ENCODE measurements at regions of chr7 and their contacts with region 1.

Region 1: GRCh38 chr7:120554960-120555571 is 282.1 kb downstream of the KCND2 start:
- DNase-seq: peak in 1 of 2 donors; percentile 13
- ATAC-seq: no peak
- H3K4me3 ChIP-seq: no peak overlapping the region
- H3K27ac ChIP-seq: no peak overlapping the region
- H3K4me1 ChIP-seq: no peaks in the 10 kb centered on the region
- H3K27me3 ChIP-seq: peaks cover 0 to 13% (median 0%) of the 10 kb centered on the region in 7 donors
- CTCF ChIP-seq: peak; percentile 20 to 68 (median 54)

Region 2: DNA sequence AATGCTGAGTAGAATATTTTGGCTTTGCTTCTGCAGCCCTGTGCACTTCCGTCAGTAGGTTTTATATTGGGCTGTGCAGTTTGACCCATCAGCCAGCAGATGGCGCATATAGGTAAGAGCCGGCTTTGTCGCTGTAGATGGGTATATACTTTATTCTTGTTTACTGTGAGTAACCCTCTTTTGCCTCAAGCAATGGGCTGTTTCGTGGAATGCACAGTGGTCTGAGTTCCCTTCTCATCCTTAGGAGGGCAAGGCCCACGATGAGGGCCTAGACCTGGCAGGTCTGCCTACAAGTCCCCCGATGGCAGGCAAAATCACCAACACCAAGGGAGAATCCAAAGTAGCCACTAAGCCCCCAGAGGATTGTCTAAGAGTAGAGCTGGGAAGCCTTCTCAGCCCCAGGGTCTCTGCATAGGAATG is 1285.0 kb before region 1 on chr7:
- intact Hi-C with region 1: loop called in 3 of 10 experiments (anchors 5 to 10 kb)
- DNase-seq: no peak
- ATAC-seq: peak in 1 of 8 donors; percentile 60
- H3K4me3 ChIP-seq: no peak overlapping the region
- H3K27ac ChIP-seq: no peak overlapping the region
- H3K4me1 ChIP-seq: no peaks in the 10 kb centered on the region
- H3K27me3 ChIP-seq: no peaks in the 10 kb centered on the region
- CTCF ChIP-seq: peak in 8 of 9 donors; percentile 34 to 79 (median 58)

Region 3: GRCh38 chr7:119935418-119936025 is 619.5 kb before region 1 on chr7:
- intact Hi-C with region 1: loop called in 2 of 10 experiments (anchors 10 kb)
- DNase-seq: no peak
- ATAC-seq: no peak
- H3K4me3 ChIP-seq: no peak overlapping the region
- H3K27ac ChIP-seq: no peak overlapping the region
- H3K4me1 ChIP-seq: no peaks in the 10 kb centered on the region
- H3K27me3 ChIP-seq: peaks cover 0 to 4% (median 0%) of the 10 kb centered on the region in 7 donors
- CTCF ChIP-seq: peak; percentile 18 to 65 (median 48)

Region 4: GRCh38 chr7:120486164-120486563 is 68.9 kb before region 1 on chr7:
- intact Hi-C with region 1: loop called in 1 of 10 experiments (anchors 10 kb)
- DNase-seq: no peak
- ATAC-seq: no peak
- H3K4me3 ChIP-seq: no peak overlapping the region
- H3K27ac ChIP-seq: no peak overlapping the region
- H3K4me1 ChIP-seq: no peaks in the 10 kb centered on the region
- H3K27me3 ChIP-seq: no peaks in the 10 kb centered on the region
- CTCF ChIP-seq: no peak